ENCODE measurements at regions of chr2 and their contacts with region 1.

Region 1: DNA sequence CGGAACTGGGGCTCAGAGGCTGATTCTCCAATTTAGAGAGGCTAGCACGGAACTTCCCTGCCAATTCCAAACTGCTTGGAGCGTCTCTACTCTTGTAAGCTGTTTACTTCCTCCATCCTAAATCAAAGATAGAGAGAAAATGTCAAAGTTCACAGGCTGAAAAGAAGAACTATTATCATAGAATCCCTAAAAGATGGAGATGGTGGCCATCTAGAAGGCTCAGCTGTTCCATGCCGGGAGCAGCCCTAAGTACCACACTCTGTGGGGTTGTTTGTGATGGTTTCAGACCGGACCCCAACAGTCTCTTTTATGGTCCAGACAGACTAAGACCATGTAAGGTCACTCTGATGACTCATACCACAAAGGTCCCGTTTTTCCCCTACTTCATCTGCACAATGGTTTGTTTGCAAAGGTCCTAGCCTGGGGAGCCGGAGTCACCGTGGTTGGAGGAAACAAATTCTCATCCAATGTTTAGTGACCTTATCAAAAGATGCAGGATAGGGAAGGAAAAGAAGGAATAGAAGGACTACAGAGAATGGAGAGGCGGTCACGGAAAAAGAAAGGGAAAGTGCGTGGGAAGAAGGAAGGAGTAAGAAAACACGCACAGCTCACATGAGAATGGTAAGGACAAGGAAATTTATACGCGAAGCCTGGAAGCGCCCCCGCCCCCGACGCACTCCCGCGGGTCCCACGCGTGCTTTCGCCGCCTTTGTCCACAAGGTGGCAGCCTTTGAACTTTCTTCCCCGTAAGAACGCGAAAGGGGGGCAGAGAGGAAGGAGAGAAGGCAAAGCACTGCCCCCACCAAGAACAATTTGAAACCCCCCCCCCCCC is 453 bp upstream of the ANTXR1 start:
- DNase-seq: peak; percentile 14 to 69 (median 51)
- ATAC-seq: peak; percentile 57
- H3K4me3 ChIP-seq: peak overlapping the region; percentile 53 to 64
- H3K4me3 Mint-ChIP-seq: peak overlapping the region; percentile 79
- H3K27ac ChIP-seq: no peak overlapping the region
- H3K27ac Mint-ChIP-seq: no peak overlapping the region
- H3K4me1 ChIP-seq: peaks cover 10% of the 10 kb centered on the region
- H3K4me1 Mint-ChIP-seq: peaks cover 14% of the 10 kb centered on the region
- H3K27me3 ChIP-seq: peaks cover 7 to 25% of the 10 kb centered on the region in 2 experiments
- H3K27me3 Mint-ChIP-seq: peaks cover 32% of the 10 kb centered on the region
- CTCF ChIP-seq: peak; percentile 62

Region 2: DNA sequence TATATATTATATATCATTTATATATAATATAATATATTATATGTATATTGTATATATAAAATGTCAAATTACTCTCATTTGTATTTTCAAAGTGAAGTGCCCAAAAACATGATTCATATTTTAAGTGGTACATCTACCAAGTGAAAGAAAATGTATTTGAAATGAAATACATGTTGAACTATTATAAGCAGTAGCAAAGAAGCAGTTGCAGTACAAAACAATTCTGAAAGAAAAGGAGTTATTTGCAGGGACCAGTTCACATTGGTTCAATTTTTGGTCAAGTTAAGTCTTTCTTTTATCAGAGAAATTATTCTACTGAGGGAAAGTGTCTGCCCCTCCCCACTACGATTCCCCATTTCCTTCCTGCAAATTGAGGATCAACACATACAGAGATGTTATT is 493.3 kb before region 1 on chr2:
- CTCF ChIA-PET with region 1: no interaction called
- POLR2A ChIA-PET with region 1: no interaction called
- intact Hi-C with region 1: no loop called
- DNase-seq: no peak
- ATAC-seq: no peak
- H3K4me3 ChIP-seq: no peak overlapping the region
- H3K4me3 Mint-ChIP-seq: no peak overlapping the region
- H3K27ac ChIP-seq: no peak overlapping the region
- H3K27ac Mint-ChIP-seq: no peak overlapping the region
- H3K4me1 ChIP-seq: no peaks in the 10 kb centered on the region
- H3K4me1 Mint-ChIP-seq: no peaks in the 10 kb centered on the region
- H3K27me3 ChIP-seq: no peaks in the 10 kb centered on the region
- H3K27me3 Mint-ChIP-seq: no peaks in the 10 kb centered on the region
- CTCF ChIP-seq: no peak

Region 3: DNA sequence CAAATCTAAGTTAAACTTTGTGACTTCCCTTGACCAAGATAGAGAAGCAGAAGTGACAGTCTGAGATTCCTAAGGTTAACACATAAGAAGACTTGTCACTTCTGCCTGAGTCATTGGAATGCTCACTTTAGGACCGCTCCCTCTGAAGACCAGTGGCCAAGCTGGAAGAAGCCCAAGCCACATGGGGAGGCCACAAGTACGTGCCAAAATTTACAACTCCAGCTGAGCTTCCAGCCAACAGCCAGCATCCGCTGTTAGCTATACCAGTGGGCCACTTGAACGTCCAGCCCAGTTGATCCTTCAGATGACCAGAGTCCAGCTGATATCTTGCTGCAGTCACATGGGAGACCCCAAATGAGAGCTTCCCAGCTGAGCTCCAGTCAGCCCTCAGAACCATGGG is 17.7 kb before region 1 on chr2:
- CTCF ChIA-PET with region 1: interaction called, 13 read pairs
- POLR2A ChIA-PET with region 1: no interaction called
- intact Hi-C with region 1: no loop called
- DNase-seq: no peak
- ATAC-seq: no peak
- H3K4me3 ChIP-seq: no peak overlapping the region
- H3K4me3 Mint-ChIP-seq: no peak overlapping the region
- H3K27ac ChIP-seq: no peak overlapping the region
- H3K27ac Mint-ChIP-seq: no peak overlapping the region
- H3K4me1 ChIP-seq: no peaks in the 10 kb centered on the region
- H3K4me1 Mint-ChIP-seq: no peaks in the 10 kb centered on the region
- H3K27me3 ChIP-seq: no peaks in the 10 kb centered on the region
- H3K27me3 Mint-ChIP-seq: peaks cover 18% of the 10 kb centered on the region
- CTCF ChIP-seq: no peak

Region 4: DNA sequence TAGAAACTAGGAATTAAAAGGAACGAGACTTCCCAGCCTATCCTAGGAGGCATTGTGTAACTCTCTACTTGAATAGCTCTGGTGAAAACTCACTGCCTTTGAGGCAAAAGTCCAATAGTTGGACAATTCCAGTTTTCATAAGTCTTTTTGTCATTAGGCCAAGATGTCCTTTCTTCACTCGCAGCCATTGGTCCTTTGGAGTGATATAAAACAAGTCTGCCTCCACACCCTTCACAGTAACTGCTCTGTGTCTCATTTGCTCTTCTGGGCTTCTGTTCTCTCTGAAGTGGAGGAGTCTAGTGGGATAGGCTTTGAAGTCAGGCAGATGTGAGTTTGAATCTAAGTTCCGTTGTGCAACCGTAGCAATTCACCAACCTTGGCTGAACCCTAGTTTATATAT is 28.7 kb after region 1 on chr2:
- CTCF ChIA-PET with region 1: no interaction called
- POLR2A ChIA-PET with region 1: no interaction called
- intact Hi-C with region 1: no loop called
- DNase-seq: no peak
- ATAC-seq: no peak
- H3K4me3 ChIP-seq: no peak overlapping the region
- H3K4me3 Mint-ChIP-seq: no peak overlapping the region
- H3K27ac ChIP-seq: no peak overlapping the region
- H3K27ac Mint-ChIP-seq: no peak overlapping the region
- H3K4me1 ChIP-seq: no peaks in the 10 kb centered on the region
- H3K4me1 Mint-ChIP-seq: no peaks in the 10 kb centered on the region
- H3K27me3 ChIP-seq: peaks cover 0 to 7% of the 10 kb centered on the region in 2 experiments
- H3K27me3 Mint-ChIP-seq: peaks cover 16% of the 10 kb centered on the region
- CTCF ChIP-seq: no peak